MCF 10A (cell line): ENCODE measurements at regions of chr16 and their contacts with region 1.

Region 1: DNA sequence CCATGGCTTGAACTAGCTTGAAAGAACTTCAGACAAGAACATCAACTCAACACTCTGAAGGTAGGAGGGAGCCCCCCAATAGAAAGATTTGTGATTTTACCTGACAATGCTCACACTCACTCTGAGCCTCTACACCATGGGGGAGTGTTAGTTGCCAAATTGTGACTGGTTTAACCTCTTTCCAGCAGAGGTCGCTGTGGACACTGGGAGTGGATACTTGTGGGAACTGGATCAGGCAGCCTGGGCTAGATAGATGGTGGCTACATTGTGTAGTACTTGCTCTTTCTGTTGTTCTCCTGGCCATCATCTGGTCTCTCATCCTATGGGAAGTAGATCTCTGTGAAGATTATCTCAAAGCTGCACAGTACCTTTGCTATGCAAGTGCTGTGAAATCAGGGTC is 2.9 kb downstream of the SMPD3 start:
- DNase-seq: peak; percentile 88
- H3K4me3 Mint-ChIP-seq: no peak overlapping the region
- H3K27ac Mint-ChIP-seq: no peak overlapping the region
- H3K4me1 Mint-ChIP-seq: no peaks in the 10 kb centered on the region
- H3K27me3 Mint-ChIP-seq: peaks cover 89% of the 10 kb centered on the region
- CTCF ChIP-seq: peak; percentile 63

Region 2: DNA sequence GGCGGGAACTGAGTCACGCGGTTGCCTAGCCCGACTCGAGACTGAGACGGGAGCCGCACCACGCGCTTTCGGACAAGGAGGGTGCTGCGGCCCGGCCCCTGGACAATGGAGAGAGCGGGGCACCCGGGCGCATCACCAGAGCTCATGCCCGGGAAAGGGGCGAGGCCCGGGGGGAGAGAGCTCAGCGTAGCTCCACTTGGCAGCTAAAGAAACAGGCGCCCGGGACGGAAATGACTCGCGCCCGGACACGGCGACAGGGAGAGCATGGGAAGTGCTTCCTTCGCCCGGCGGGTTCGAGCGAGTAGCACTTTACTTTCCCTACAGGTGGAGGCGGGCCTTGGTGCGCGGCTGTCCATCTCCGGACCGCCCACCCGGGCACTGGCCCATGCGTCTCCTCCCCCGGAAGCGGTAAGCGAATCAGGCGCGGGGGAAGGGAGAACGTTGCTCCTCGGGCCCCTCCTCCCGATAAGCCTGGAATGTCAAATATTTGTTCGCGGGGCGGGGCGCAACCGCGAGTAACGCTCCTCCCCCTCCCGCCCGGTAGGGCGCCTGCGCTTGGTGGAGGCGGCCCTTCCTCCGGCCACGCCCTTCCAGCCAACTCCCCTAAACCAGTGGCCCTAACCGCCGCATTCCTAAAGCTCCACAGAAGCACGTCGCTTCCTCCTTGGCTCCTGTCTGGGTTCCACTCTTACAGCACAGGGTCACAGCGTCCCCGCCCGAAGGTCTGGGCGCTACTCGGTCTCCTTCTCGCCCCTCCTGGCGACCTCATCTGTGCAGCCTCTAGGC is 208.0 kb before region 1 on chr16:
- CTCF ChIA-PET with region 1: no interaction called
- POLR2A ChIA-PET with region 1: no interaction called
- intact Hi-C with region 1: no loop called
- DNase-seq: peak; percentile 98
- H3K4me3 Mint-ChIP-seq: peak overlapping the region; percentile 81
- H3K27ac Mint-ChIP-seq: peak overlapping the region; percentile 94
- H3K4me1 Mint-ChIP-seq: peaks cover 16% of the 10 kb centered on the region
- H3K27me3 Mint-ChIP-seq: no peaks in the 10 kb centered on the region
- CTCF ChIP-seq: no peak

Region 3: DNA sequence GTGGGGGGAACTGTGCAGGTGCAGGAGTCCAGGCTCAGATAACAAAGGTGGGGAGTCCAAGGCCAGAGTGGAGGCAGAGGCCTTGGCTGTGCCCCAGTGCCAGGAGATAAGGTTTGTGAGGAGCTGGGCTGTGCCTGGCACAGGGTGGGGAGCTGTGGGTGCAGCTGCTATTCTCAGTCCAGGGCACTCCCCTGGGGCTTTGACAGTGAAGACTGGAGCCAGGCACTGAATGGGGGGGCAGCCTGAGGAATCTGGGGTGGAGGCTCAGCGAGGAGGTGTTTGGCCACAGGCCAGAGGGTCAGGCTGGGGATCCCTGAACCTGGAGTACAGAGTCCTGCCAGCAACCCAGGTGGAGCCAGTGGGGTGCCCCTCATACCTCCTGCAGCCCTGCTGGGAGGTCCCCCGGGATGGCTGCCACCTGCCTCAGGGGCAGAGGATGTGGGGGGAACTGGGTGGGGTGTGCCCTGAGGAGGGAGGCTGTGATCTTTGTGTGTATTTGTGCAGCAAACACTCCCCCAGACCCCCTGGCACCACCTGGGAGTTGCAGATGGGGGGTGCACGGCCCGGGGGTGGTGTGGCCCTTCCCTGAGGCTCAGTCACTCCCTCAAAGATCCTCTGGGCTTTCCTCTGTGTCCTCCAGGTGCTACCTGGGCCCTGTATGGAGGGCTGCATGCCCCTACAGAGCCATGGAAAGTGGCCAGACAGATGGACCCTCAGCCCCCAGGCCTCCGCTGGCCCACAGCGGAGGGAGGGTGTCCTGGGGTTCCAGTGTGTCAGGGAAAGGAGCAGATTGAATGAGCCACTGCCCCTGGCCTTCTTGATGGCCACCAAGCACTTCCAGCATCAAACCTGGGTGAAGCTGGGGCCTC is 47.3 kb after region 1 on chr16:
- CTCF ChIA-PET with region 1: no interaction called
- POLR2A ChIA-PET with region 1: no interaction called
- intact Hi-C with region 1: no loop called
- DNase-seq: no peak
- H3K4me3 Mint-ChIP-seq: no peak overlapping the region
- H3K27ac Mint-ChIP-seq: peak overlapping the region; percentile 32
- H3K4me1 Mint-ChIP-seq: peaks cover 34% of the 10 kb centered on the region
- H3K27me3 Mint-ChIP-seq: no peaks in the 10 kb centered on the region
- CTCF ChIP-seq: no peak

Region 4: GRCh38 chr16:68512183-68512582 is 66.7 kb after region 1 on chr16:
- CTCF ChIA-PET with region 1: interaction called, 3 read pairs
- POLR2A ChIA-PET with region 1: no interaction called
- intact Hi-C with region 1: loop called (anchors 1 kb)
- DNase-seq: no peak
- H3K4me3 Mint-ChIP-seq: no peak overlapping the region
- H3K27ac Mint-ChIP-seq: no peak overlapping the region
- H3K4me1 Mint-ChIP-seq: no peaks in the 10 kb centered on the region
- H3K27me3 Mint-ChIP-seq: peaks cover 28% of the 10 kb centered on the region
- CTCF ChIP-seq: no peak

Region 5: DNA sequence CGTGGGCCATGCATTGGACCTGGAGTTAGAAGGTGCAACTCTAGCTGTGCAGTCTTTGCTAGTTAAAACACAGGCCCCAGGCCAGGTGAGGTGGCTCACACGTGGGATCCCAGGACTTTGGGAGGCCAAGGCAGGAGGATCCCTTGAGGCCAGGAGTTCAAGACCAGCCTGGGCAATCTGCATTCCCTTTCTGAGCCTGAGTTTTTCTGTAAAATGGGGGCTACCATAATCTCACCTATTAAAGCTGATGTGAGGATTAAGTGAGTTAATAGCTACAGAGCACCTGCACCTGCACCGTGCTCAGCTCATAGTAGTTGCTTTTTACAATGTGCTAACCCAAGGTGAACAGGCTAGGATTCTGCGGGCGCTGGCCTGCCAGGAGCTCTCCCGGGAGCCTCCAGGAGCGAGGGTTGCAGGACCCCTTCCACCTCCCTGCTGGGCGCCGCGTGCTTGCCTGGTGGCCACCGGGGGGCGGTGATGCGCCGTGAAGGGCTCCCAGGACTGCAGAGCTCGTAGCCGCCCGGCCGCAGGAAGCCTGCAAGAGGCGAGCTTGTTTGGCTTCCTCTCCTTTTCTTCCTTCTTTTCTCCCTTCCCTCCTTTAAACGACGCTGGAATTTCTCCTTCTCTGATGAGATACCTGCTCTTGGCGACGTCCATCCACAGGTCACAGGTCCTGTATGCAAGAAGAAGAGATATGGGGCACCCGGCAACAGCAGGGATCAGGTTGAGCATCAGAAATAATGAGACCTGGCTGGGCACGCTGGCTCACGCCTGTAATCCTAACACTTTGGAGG is 144.9 kb after region 1 on chr16:
- CTCF ChIA-PET with region 1: no interaction called
- POLR2A ChIA-PET with region 1: no interaction called
- intact Hi-C with region 1: no loop called
- DNase-seq: peak; percentile 79
- H3K4me3 Mint-ChIP-seq: no peak overlapping the region
- H3K27ac Mint-ChIP-seq: no peak overlapping the region
- H3K4me1 Mint-ChIP-seq: peaks cover 6% of the 10 kb centered on the region
- H3K27me3 Mint-ChIP-seq: no peaks in the 10 kb centered on the region
- CTCF ChIP-seq: peak; percentile 98